ENCODE measurements at regions of chr16 and their contacts with region 1.

Region 1: DNA sequence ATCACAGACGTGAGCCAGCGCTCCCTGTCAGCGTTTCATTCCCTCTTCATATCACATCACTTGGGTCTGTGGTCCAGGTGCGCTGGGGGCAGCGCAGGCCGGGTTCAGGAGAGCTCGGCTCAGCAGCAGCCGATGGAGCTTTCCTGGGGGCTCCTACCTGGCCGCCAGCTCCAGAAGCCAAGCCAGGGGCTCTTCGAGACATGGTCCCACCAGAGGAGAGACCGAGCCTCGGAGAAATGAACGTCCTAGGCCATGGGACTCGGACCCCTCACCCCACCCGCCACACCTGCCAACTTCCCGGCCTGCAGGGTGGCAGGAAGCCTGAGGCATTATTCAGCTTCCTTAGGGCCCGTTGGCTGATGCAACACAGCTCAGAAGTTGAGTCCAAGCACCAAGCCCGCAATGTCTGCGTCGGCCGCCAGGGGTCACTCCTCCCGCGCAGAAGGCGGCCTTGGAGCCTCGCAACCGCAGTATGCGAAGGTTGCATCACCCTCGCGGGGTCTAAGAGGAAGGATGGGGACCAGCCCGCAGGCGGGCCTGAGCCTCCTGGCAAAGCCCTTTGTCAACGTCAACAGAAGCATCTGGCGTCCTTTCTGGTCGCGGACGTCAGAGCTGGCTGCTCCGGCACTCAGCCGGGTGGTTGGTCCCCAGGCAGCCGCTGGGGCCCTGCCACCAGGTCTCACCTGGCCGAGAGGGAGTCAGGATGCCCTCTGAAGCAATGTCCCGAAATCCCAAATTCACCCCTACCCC is 13.2 kb upstream of the KLHDC4 start:
- DNase-seq: peak; percentile 93
- H3K4me3 ChIP-seq: no peak overlapping the region
- H3K27ac ChIP-seq: peak overlapping the region; percentile 93
- H3K27me3 ChIP-seq: no peaks in the 10 kb centered on the region
- CTCF ChIP-seq: peak; percentile 87

Region 2: DNA sequence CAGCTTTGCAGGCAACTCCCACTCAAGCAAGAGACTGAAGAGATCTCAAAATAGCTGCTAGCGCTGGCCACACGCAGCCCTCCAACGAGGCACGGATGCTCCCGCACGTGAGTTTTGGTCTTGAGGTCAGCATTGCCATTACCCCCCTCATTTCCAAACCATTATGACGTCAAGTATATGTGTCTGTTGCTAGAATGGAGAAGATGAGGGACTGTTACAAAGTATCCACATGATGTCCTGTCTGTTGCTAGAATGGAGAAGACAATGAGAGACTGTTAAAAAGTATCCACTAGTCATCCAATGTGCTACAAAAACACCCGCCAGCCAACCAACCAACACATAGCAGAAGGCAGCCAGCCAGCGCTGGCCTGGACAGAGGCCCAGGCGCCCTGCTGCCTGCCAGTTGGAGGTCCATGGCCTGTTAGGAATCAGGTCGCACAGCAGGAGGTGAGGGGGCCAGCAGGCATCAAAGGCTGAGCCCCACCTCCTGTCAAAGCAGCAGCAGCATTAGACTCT is 38.0 kb before region 1 on chr16:
- CTCF ChIA-PET with region 1: no interaction called
- POLR2A ChIA-PET with region 1: no interaction called
- DNase-seq: no peak
- H3K4me3 ChIP-seq: no peak overlapping the region
- H3K27ac ChIP-seq: no peak overlapping the region
- H3K27me3 ChIP-seq: no peaks in the 10 kb centered on the region
- CTCF ChIP-seq: no peak

Region 3: GRCh38 chr16:87790278-87791032 is 11.4 kb after region 1 on chr16:
- CTCF ChIA-PET with region 1: interaction called, 32 read pairs
- POLR2A ChIA-PET with region 1: interaction called, 3 read pairs
- DNase-seq: no peak
- H3K4me3 ChIP-seq: no peak overlapping the region
- H3K27ac ChIP-seq: peak overlapping the region; percentile 82
- H3K27me3 ChIP-seq: no peaks in the 10 kb centered on the region
- CTCF ChIP-seq: no peak

Region 4: DNA sequence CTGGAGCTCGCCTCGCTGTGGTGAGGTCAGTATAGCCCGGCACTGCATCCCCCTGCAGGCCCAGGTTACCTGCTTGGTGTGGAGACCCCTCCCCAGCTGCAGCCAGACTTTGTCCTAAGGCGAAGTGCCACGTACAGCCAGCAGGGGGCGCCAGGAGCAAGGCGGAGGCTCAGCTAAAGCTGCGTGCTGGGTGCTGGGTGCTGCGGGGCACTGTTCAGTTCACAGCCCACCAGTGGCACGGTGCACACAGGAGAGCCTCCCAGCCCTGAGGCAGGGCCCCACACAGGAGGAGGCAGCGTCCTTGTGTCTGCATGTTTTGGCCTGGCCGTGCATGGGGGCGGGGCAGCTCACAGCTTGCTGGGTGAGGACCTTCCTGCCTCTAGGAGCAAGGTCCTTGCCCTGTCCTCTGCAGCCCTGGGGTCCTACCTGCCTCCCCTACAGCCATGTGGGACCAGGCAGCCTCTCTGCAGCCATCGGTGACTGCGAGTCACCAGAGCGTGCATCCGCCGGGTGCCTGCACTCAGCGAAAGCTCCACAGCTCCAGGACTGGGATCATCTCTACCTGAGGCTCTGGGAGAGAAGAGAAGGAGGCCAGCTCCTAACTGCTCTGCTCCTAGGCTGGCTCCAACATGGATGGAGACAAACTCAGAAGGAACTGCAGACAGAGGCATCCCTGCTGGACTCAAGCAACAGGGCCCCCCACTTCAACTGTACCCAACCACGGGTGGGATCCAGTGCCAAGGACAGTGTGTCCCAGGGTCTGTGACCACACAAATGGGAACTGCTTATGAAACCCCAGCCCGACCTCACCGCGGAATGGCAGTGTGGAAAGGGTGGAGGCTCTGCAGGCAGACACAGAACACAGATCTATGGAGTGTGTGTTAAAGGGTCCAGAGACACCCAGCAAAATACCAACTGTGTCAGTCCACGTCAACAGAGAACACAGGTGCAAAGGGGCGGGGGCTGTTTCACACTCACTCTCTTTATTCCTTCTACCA is 71.3 kb after region 1 on chr16:
- CTCF ChIA-PET with region 1: interaction called, 22 read pairs
- POLR2A ChIA-PET with region 1: no interaction called
- DNase-seq: no peak
- H3K4me3 ChIP-seq: no peak overlapping the region
- H3K27ac ChIP-seq: peak overlapping the region; percentile 11
- H3K27me3 ChIP-seq: no peaks in the 10 kb centered on the region
- CTCF ChIP-seq: peak; percentile 85

Region 5: GRCh38 chr16:87864331-87864989 is 85.5 kb after region 1 on chr16:
- CTCF ChIA-PET with region 1: interaction called, 207 read pairs
- POLR2A ChIA-PET with region 1: interaction called, 16 read pairs
- DNase-seq: no peak
- H3K4me3 ChIP-seq: no peak overlapping the region
- H3K27ac ChIP-seq: no peak overlapping the region
- H3K27me3 ChIP-seq: no peaks in the 10 kb centered on the region
- CTCF ChIP-seq: no peak

Region 6: DNA sequence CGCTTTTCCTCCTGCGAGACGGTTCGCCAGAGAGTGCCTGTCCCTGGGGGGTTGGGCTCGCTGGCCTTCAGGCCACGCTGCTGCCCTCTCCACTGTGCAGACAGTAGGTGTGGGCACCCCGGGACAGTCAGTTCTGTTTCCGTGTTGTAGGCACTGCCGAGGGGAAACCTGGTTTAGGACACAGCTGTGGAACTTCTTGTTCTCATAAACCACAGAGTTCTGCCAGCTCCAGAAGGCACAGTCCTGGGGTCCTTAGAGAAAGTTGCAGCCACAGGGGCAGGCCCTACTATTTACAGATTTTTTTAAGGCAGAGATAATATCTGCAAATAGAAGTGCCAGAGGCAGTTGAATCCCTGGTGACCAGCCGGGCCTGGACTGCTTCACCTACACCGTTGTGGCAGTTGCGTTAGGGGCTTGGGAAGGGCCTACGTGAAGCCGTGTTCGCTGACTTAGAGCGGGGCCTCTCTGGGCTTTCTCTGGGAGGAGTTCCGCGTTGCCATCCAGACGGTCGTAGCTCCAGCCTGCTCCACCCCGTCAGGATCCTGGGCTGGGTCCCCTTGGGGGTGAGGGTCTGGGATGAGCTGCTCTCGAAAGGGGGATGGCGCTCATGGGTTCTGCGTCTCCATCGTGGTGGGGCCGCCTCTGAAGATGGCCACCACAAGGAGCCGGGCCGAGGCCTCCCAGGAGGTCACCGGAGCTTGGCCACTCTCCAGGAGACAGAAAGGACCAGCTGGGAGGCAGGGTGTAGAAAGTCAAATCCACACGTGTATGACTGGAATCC is 298.5 kb after region 1 on chr16:
- CTCF ChIA-PET with region 1: interaction called, 10 read pairs
- POLR2A ChIA-PET with region 1: no interaction called
- DNase-seq: no peak
- H3K4me3 ChIP-seq: no peak overlapping the region
- H3K27ac ChIP-seq: no peak overlapping the region
- H3K27me3 ChIP-seq: no peaks in the 10 kb centered on the region
- CTCF ChIP-seq: no peak